ENCODE measurements at regions of chr7 and their contacts with region 1.

Region 1: DNA sequence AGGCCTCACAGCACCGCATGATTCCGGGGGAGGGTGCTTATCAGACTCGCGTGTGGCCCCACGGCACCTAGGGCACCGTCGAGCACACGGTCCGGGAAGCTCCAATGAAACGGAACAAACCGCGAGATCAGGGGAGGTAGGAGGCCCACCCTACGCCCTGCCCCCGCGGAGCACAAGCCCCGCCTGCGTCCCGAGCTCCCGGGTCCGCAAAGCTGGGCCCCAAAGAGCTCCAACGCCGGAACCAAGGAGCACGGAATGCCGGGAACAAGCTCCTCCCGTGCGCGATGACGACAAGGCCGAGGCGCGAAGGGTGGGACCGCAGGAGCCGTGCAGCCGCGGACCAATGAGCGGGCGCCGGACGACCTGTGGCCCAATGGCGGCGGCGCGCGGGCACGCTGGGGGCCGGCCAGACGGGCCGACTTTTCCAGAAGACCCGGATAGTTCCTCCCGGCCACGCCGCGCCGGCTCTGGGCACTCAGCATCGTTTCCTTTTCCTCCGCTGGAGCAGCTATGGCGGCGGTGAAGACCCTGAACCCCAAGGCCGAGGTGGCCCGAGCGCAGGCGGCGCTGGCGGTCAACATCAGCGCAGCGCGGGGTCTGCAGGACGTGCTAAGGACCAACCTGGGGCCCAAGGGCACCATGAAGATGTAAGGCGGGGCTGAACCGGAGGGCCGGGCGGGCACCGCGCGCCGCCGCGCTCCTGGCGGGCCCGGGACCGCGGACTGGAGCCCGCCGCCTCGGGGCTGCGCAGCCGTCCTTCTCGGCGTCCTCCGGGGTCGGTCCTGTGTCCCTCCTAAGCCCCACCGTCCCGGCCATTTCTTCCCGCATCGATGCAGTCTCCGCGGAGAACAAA is at the starts of genes CCT6A and PSPH:
- DNase-seq: peak; percentile 98
- H3K4me3 Mint-ChIP-seq: peak within 1 kb of the TSS; percentile 100
- H3K27ac Mint-ChIP-seq: peak within 1 kb of the TSS; percentile 98
- H3K4me1 Mint-ChIP-seq: peaks cover 29% of the 10 kb centered on the region
- H3K27me3 Mint-ChIP-seq: no peaks in the 10 kb centered on the region
- total RNA-seq, gene CCT6A: 339 and 342 TPM in 2 replicates
- total RNA-seq, gene PSPH: 23.8 and 25.8 TPM in 2 replicates

Region 2: GRCh38 chr7:55365675-55366460 is 685.7 kb before region 1 on chr7:
- intact Hi-C with region 1: loop called (anchors 2 kb)
- DNase-seq: peak; percentile 98
- H3K4me3 Mint-ChIP-seq: peak overlapping the region; percentile 96
- H3K27ac Mint-ChIP-seq: peak overlapping the region; percentile 96
- H3K4me1 Mint-ChIP-seq: peaks cover 32% of the 10 kb centered on the region
- H3K27me3 Mint-ChIP-seq: peaks cover 1% of the 10 kb centered on the region

Region 3: DNA sequence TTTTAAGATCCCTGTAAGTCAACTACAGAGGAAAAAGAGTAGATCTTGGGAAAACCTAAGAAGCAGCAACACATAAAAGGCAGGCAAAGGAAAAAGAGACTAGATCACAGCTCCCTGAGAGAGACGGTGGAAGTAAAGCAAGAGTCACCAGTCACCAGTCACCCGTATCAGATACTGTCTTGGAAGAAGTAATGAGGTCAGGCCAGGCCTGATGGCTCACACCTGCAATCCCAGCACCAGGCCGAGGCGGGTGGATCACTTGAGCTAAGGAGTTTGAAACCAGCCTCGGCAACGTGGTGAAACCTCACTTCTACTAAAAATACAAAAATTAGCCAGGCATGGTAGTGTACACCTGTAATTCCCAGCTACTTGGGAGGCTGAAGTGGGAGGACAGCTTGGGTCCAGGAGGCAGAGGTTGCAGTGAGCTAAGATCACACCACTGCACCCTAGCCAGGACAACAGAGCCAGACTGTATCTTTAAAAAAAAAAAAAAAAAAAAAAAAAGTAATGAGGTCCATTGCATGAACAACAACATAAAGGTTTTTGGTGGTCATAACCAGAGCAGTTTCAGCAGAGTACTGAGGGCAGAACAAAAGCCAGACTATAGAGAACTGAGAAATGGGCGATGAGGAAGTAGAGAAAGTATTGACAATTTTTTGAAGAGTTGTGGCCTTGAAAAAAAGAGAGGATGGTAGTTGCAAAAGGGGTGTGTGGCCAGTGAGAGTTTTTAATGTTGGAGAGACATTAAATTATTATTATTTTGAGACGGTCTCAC is 147.4 kb before region 1 on chr7:
- intact Hi-C with region 1: no loop called
- DNase-seq: no peak
- H3K4me3 Mint-ChIP-seq: no peak overlapping the region
- H3K27ac Mint-ChIP-seq: no peak overlapping the region
- H3K4me1 Mint-ChIP-seq: no peaks in the 10 kb centered on the region
- H3K27me3 Mint-ChIP-seq: no peaks in the 10 kb centered on the region

Region 4: GRCh38 chr7:55951637-55952351 is 99.8 kb before region 1 on chr7 and contains the start of gene MRPS17:
- intact Hi-C with region 1: loop called (anchors 5 kb)
- DNase-seq: peak; percentile 98
- H3K4me3 Mint-ChIP-seq: peak within 1 kb of the TSS; percentile 98
- H3K27ac Mint-ChIP-seq: peak within 1 kb of the TSS; percentile 98
- H3K4me1 Mint-ChIP-seq: peaks cover 10% of the 10 kb centered on the region
- H3K27me3 Mint-ChIP-seq: no peaks in the 10 kb centered on the region
- total RNA-seq, gene MRPS17: 36.4 and 37.6 TPM in 2 replicates

Region 5: GRCh38 chr7:56033671-56034432 is 17.7 kb before region 1 on chr7:
- intact Hi-C with region 1: loop called (anchors 1 kb)
- DNase-seq: peak; percentile 94
- H3K4me3 Mint-ChIP-seq: peak overlapping the region; percentile 85
- H3K27ac Mint-ChIP-seq: peak overlapping the region; percentile 56
- H3K4me1 Mint-ChIP-seq: peaks cover 8% of the 10 kb centered on the region
- H3K27me3 Mint-ChIP-seq: no peaks in the 10 kb centered on the region

Region 6: DNA sequence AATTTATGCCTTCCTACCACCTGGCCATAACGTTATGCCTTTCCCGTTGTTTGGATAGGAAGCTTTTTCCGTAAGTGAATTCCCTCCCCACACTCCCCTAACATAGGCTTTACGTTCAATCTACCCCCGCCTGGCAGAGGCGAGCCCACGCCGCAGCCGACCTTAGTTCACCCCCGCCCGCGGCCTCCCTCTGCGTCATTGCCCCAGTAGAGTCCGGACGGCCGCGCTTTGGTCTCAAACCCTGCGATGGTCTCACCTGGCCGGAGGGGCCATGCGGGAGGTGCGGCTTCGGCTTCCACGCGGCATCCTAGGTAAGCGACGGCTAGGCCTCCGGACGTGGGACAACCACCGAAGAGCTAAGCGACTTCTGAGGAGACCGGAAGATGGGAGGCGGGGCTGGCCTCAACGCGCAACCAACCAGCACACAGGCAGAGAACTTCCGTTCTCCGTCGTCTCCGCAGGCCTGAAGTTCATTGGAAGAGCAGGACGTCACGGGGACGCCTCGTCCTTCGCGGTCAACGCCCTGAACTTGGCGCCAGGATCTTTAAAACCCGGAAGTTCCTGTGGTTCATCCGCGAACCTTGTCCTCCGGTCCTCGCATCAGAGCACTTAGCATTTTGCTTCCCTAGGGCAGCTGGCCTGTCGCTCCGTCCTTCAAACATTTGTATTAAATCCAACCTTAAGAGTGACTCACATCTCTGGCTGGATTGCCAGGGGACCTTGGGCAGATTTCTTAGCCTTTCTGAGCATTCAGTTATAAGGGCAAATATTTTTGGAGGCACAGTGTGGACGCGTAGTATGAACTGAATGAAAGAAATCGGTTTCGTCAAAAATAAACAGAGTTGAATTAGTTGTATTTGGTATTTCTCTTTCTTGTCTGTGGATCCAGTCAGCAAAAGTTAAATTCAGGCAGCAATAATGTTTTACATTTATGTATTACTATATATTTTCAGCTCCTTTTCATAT is 54.8 kb after region 1 on chr7 and contains the start of gene CHCHD2:
- intact Hi-C with region 1: loop called (anchors 1 kb)
- DNase-seq: peak; percentile 98
- H3K4me3 Mint-ChIP-seq: peak within 1 kb of the TSS; percentile 95
- H3K27ac Mint-ChIP-seq: peak within 1 kb of the TSS; percentile 98
- H3K4me1 Mint-ChIP-seq: peaks cover 23% of the 10 kb centered on the region
- H3K27me3 Mint-ChIP-seq: no peaks in the 10 kb centered on the region
- total RNA-seq, gene CHCHD2: 627 and 634 TPM in 2 replicates